ENCODE measurements at regions of chr22 and their contacts with region 1.

Region 1: DNA sequence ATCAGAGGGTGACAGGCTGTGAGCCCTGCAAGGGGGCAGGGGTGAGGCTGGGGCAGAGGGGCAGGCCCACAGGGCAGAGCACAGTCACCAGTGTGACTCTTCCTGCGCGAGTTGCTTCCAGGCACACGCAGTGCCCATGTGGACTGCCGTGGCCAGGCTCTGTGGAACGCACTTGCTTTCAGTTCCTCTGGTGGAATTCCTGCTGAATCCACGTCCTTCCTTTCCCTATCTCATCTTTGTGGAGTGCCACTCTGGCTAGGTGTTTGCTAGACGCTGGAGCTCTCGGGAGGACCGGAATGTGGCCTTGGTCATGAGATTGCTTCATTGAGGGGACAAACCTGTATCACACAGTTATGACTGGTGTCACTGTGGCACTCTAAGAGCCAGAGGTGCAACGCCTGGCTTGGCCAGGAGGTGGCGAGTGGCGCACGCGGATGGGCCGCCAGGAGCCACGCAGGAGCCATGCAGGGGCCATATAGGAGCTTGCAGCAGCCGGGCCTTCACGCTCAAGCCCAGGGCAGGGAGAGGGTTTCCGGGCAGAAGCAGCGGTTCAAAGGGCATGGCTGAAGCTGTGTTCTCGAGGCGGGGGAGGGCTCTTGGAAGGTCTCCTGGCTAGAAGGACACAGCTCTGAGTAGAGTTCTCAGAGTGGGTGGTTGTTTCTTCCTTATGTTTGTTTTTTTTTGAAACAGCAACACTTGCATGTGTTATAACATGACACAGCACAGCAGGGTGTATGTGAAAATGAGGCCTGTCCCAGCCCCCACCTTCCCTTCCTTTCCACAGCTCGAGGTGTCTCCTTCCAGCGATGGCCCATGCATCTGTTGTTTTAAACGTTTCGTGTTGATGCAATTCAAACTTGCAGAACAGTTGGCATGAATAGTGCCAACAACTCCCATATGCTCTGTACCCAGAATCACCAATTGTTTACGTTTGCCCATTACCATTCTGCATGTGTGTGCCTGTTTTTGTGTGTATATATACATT is 36.2 kb downstream of the TBC1D22A start:
- DNase-seq: peak; percentile 80
- ATAC-seq: peak; percentile 88
- H3K4me3 Mint-ChIP-seq: no peak overlapping the region
- H3K27ac Mint-ChIP-seq: peak overlapping the region; percentile 54
- H3K4me1 Mint-ChIP-seq: peaks cover 7% of the 10 kb centered on the region
- H3K27me3 Mint-ChIP-seq: no peaks in the 10 kb centered on the region

Region 2: DNA sequence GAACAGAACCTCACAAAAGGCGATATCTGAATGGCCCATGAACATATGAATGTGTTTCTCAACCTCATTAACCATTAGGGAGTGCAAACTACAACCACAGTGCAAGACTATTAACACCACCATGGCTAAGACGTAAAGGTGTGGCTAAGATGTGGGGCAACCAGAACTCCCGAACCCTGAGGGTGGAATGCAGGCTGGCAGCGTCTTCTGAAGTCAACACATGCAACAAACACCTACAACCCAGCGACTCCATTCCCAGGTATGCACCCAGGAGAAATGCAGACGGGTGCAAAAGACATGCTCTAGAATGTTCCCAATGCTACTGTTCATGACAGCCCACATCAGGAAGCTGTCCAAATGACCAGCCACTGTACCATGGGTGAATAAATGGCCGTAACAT is 81.6 kb before region 1 on chr22:
- CTCF ChIA-PET with region 1: no interaction called
- DNase-seq: no peak
- ATAC-seq: no peak
- H3K4me3 Mint-ChIP-seq: no peak overlapping the region
- H3K27ac Mint-ChIP-seq: no peak overlapping the region
- H3K4me1 Mint-ChIP-seq: peaks cover 2% of the 10 kb centered on the region
- H3K27me3 Mint-ChIP-seq: no peaks in the 10 kb centered on the region

Region 3: DNA sequence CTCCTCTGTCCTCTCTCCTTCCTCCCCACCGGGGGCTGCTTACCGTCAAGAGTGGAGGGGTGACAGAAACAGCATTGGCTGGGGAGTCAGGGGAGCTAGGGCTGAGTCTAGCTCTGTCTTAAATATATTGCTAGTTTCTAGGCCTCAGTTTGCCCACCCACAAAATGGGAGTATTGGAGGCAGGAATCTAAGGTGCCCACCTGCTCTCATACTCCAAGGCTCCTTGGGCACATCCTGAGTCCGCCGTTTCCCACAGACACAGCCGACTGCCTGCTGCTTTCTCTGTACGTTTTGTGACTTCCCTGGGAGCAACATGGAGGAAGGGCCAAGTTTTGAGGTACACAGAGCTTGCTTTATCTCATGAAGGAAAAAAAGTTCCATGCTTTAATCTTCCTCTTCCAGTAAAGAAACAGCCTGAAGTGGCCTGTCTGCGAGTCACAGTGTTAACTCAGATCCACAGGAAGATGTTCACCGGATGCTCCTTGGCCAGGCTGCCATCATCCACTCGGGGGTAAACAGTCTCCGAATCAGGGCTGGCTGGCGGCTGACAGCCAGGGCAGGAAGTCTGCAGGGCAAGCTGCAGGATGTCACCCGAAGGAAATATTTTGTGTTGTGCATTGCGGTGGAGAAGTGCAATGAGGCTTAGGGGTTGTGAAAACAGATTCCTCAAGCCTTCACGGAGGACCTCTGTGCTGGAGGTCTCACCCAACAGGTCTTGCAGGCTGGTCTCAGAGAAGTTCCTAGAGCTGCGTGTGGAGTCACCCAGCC is 49.6 kb before region 1 on chr22:
- CTCF ChIA-PET with region 1: interaction called, 13 read pairs
- DNase-seq: peak; percentile 81
- ATAC-seq: peak; percentile 89
- H3K4me3 Mint-ChIP-seq: peak overlapping the region; percentile 54
- H3K27ac Mint-ChIP-seq: peak overlapping the region; percentile 93
- H3K4me1 Mint-ChIP-seq: peaks cover 21% of the 10 kb centered on the region
- H3K27me3 Mint-ChIP-seq: no peaks in the 10 kb centered on the region

Region 4: DNA sequence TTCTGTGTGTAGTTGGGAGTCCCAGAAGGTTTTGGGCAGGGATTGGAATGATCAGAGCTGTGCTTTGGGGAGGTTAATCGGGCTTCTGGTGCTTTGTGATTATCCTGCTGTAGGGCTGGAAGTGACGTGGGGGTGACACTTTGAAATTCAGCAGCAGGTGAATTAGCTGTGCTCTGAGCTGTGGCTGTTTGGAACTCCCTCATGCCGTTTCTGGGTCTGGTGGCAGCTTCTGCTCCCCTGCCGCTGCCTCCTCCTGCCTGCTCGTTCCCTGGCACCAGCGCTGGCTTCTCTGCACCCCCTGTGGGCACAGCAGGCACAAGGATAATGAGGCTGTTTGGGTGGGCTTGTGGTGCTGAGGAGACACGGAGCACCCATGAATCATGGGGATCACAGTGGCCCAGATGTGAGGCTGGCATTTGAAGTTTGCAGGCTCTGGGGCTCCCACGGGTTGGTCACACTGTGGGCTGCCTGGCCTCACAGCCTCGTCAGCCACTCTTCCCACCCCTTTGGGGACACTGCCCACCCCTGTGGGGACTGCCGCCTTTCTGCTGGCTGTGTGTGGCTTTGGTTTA is 13.5 kb after region 1 on chr22:
- CTCF ChIA-PET with region 1: interaction called, 19 read pairs
- DNase-seq: no peak
- ATAC-seq: no peak
- H3K4me3 Mint-ChIP-seq: no peak overlapping the region
- H3K27ac Mint-ChIP-seq: no peak overlapping the region
- H3K4me1 Mint-ChIP-seq: peaks cover 12% of the 10 kb centered on the region
- H3K27me3 Mint-ChIP-seq: no peaks in the 10 kb centered on the region

Region 5: DNA sequence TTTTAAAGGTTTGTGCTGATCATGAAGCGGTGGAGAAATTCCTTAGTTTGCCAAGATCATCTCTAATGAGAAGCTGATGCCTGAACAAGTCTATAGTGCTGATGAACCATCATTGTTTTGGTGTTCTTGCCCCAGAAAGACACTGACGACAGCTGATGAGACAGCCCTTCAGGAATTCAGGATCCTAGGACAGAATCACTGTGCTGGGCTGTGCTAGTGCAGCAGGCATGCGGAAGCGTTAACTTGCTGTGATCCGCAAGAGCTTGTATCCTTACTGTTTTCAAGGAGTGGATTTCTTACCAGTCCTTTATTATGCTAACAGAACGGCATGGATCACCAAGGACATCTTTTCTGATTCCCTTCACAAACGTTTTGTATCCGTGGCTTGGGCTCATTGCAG is 67.9 kb after region 1 on chr22:
- CTCF ChIA-PET with region 1: no interaction called
- DNase-seq: no peak
- ATAC-seq: no peak
- H3K4me3 Mint-ChIP-seq: no peak overlapping the region
- H3K27ac Mint-ChIP-seq: no peak overlapping the region
- H3K4me1 Mint-ChIP-seq: no peaks in the 10 kb centered on the region
- H3K27me3 Mint-ChIP-seq: no peaks in the 10 kb centered on the region

Region 6: GRCh38 chr22:46878191-46878948 is 79.7 kb after region 1 on chr22:
- CTCF ChIA-PET with region 1: no interaction called
- DNase-seq: no peak
- ATAC-seq: no peak
- H3K4me3 Mint-ChIP-seq: no peak overlapping the region
- H3K27ac Mint-ChIP-seq: no peak overlapping the region
- H3K4me1 Mint-ChIP-seq: peaks cover 3% of the 10 kb centered on the region
- H3K27me3 Mint-ChIP-seq: no peaks in the 10 kb centered on the region

Measured in activated CD8-positive, alpha-beta memory T cell treated with anti-CD3 and anti-CD28 coated beads, Interleukin-2, amount 10 ng/mL, durations not matched to agents 7 days and 5 days (primary cell).